Sigmoid colon (tissue), 7 donors: ENCODE measurements at regions of chr19 and their contacts with region 1.

Region 1: DNA sequence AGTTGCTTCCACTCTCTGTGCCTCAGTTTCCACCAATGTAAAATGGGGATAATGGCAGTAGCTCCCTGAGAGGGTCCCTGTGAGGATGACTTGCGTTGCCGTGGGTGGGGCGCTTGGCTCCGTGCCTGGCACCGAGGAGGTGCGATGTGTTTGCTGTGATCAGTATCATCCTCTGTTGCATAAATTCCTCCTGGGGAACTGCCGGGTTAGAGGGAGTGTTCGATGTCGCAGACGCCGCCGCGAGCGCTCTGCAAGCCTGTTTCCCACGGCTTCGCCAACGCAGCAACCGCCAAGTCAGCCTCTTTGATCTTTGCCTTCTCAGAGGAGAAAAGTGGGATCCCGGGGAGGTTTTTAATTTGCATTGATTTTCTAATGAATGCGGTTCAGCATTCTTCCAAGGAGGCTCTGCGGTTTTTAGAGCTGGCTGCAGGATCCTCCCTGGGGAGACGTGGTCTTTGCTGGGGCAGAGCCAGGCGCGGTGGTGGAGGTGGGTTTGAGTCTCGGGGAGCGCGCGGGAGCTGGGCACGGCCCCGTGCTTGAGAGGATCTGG is 7.6 kb downstream of the GPR32 start:
- DNase-seq: no peak
- H3K4me3 ChIP-seq: no peak overlapping the region
- H3K27ac ChIP-seq: no peak overlapping the region
- H3K4me1 ChIP-seq: no peaks in the 10 kb centered on the region
- H3K27me3 ChIP-seq: peaks cover 20 to 95% (median 70%) of the 10 kb centered on the region in 3 donors
- CTCF ChIP-seq: no peak
- EP300 ChIP-seq: no peak
- POLR2A ChIP-seq: no peak

Region 2: GRCh38 chr19:50669302-50670101 is 108.3 kb before region 1 on chr19:
- intact Hi-C with region 1: loop called (anchors 5 kb)
- DNase-seq: no peak
- H3K4me3 ChIP-seq: no peak overlapping the region
- H3K27ac ChIP-seq: no peak overlapping the region
- H3K4me1 ChIP-seq: peaks cover 0 to 24% (median 8%) of the 10 kb centered on the region in 4 donors
- H3K27me3 ChIP-seq: peaks cover 39 to 93% (median 43%) of the 10 kb centered on the region in 3 donors
- CTCF ChIP-seq: peak in 3 of 4 experiments; percentile 47 to 65 (median 49)
- EP300 ChIP-seq: no peak
- POLR2A ChIP-seq: no peak